Upper lobe of right lung (tissue), 1 donor: ENCODE measurements at regions of chr9 and their contacts with region 1.

Region 1: GRCh38 chr9:36102742-36103495 is 33.6 kb upstream of the GLIPR2 start:
- DNase-seq: peak; percentile 91
- ATAC-seq: peak; percentile 100
- H3K4me3 ChIP-seq: no peak overlapping the region
- H3K27ac ChIP-seq: no peak overlapping the region
- H3K4me1 ChIP-seq: no peaks in the 10 kb centered on the region
- H3K27me3 ChIP-seq: no peaks in the 10 kb centered on the region
- CTCF ChIP-seq: peak; percentile 83

Region 2: GRCh38 chr9:36036780-36037548 is 66.0 kb before region 1 on chr9 and contains the start of gene RECK:
- intact Hi-C with region 1: no loop called
- DNase-seq: peak; percentile 94
- ATAC-seq: peak; percentile 99
- H3K4me3 ChIP-seq: peak within 1 kb of the TSS; percentile 86
- H3K27ac ChIP-seq: peak within 1 kb of the TSS; percentile 79
- H3K4me1 ChIP-seq: peaks cover 34% of the 10 kb centered on the region
- H3K27me3 ChIP-seq: no peaks in the 10 kb centered on the region
- CTCF ChIP-seq: no peak
- total RNA-seq, gene RECK: 20.1 TPM

Region 3: GRCh38 chr9:36166101-36166927 is 63.4 kb after region 1 on chr9:
- intact Hi-C with region 1: loop called (anchors 5 kb)
- DNase-seq: peak; percentile 90
- ATAC-seq: peak; percentile 98
- H3K4me3 ChIP-seq: peak overlapping the region; percentile 51
- H3K27ac ChIP-seq: peak overlapping the region; percentile 76
- H3K4me1 ChIP-seq: peaks cover 23% of the 10 kb centered on the region
- H3K27me3 ChIP-seq: no peaks in the 10 kb centered on the region
- CTCF ChIP-seq: peak; percentile 93